ENCODE measurements at regions of chr14 and their contacts with region 1.

Region 1: DNA sequence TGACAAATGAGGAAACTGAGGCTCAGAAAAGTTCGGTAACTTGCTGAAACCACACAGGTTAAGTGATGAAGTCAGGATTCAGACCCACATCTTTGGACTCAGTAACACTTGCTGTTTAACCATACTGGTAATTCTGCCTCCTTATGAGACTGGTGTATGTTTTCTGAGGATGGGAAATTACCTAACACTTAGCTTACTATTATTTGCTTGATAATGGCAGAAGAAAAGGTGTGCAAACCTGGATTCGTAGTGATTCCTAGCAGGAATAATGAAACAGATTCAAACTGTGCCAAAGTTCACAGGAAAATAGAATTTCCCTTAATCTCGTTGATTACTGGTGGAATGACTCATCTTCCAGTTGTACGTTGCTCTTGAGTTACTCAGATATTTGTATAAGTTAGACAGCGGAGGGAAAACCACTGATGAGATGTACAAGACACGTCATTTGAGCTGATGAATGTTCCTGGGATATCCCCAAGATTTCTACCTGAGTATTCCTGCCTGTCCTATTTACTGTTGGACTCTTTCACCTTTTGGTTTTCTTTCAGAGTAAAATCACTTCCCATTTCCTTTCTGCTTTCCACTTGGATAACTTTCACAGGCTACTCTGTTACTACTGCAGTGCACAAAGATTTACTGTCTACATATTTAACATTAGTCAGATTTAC is 37.5 kb downstream of the PRORP start:
- DNase-seq: no peak
- ATAC-seq: peak; percentile 64
- H3K4me3 ChIP-seq: no peak overlapping the region
- H3K27ac ChIP-seq: peak overlapping the region; percentile 45; the same call in 1 of the 2 replicates
- H3K4me1 ChIP-seq: peaks cover 19% of the 10 kb centered on the region
- H3K27me3 ChIP-seq: no peaks in the 10 kb centered on the region
- CTCF ChIP-seq: no peak
- EP300 ChIP-seq: peak in 1 of 2 experiments; percentile 14; a peak in 1 of 4 replicates
- POLR2A ChIP-seq: no peak
- RAD21 ChIP-seq: no peak

Region 2: DNA sequence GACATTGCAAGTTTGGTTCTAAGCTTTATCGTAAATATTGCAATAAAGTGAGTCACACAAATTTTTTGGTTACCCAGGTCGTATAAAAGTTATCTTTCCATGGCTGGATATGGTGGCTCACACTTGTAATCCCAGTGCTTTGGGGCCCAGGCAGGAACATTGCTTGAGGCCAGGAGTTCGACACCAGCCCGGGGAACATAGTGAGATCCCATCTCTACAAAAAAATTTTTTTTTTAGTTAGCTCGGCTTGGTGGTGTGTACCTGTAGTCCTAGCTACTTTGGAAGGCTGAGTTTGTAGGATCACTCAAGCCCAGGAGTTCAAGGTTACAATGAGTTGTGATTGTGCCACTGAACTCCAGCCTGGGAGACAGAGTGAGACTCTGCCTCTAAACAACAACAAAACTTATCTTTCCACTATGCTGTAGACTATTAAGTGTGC is 13.1 kb before region 1 on chr14:
- CTCF ChIA-PET with region 1: interaction called, 28 read pairs
- POLR2A ChIA-PET with region 1: interaction called, 9 read pairs
- RAD21 ChIA-PET with region 1: interaction called, 10 read pairs
- SMC1A ChIA-PET with region 1: interaction called, 41 read pairs
- in situ Hi-C with region 1: no loop called
- intact Hi-C with region 1: no loop called
- DNase-seq: no peak
- ATAC-seq: no peak
- H3K4me3 ChIP-seq: no peak overlapping the region
- H3K27ac ChIP-seq: no peak overlapping the region
- H3K4me1 ChIP-seq: peaks cover 10% of the 10 kb centered on the region
- H3K27me3 ChIP-seq: no peaks in the 10 kb centered on the region
- CTCF ChIP-seq: no peak
- EP300 ChIP-seq: no peak
- POLR2A ChIP-seq: no peak
- RAD21 ChIP-seq: no peak

Region 3: GRCh38 chr14:35215110-35215876 is 55.4 kb after region 1 on chr14:
- CTCF ChIA-PET with region 1: interaction called, 10 read pairs
- POLR2A ChIA-PET with region 1: no interaction called
- RAD21 ChIA-PET with region 1: interaction called, 7 read pairs
- SMC1A ChIA-PET with region 1: interaction called, 5 read pairs
- in situ Hi-C with region 1: no loop called
- intact Hi-C with region 1: no loop called
- DNase-seq: no peak
- ATAC-seq: peak; percentile 63
- H3K4me3 ChIP-seq: no peak overlapping the region
- H3K27ac ChIP-seq: no peak overlapping the region
- H3K4me1 ChIP-seq: no peaks in the 10 kb centered on the region
- H3K27me3 ChIP-seq: no peaks in the 10 kb centered on the region
- CTCF ChIP-seq: peak; percentile 24 to 61 (median 31); a peak in 5 of 6 replicates
- EP300 ChIP-seq: no peak
- POLR2A ChIP-seq: no peak
- RAD21 ChIP-seq: peak; percentile 69

Region 4: DNA sequence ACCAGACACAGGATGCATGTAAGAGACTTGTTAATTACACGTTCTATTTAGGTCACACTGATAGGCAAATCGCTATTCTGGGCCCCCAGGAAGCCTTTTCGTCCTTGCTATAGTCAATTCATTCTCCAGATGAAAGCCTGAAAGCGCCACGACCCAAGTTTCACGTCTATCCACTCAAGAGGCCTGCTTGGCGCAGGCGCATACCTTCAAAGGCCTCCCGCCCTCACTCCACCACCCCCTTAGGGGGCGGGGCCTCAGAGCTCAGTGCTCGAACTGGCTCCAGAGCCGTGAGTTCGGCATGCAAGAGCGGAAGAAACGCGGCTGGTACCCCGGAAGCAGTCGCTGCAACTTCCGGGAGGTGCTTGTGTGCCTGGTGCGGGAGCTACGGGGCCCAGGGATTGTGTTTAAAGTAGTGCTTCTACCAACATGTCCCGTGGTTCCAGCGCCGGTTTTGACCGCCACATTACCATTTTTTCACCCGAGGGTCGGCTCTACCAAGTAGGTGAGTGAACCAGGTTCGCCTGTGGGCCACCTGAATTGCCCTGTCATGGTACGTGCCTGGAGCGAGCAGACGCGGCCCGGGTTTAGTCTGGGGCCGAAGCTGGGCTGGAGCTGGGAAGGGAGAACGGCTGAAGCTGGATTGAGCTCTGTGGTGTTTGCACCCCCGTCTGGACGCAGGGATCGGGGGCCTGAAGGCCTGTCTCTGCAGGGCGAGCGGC is 132.3 kb after region 1 on chr14 and contains the start of gene PSMA6:
- CTCF ChIA-PET with region 1: interaction called, 3 read pairs
- POLR2A ChIA-PET with region 1: no interaction called
- RAD21 ChIA-PET with region 1: interaction called, 10 read pairs
- SMC1A ChIA-PET with region 1: interaction called, 12 read pairs
- in situ Hi-C with region 1: no loop called
- intact Hi-C with region 1: loop called (anchors 5 kb)
- DNase-seq: peak; percentile 98
- ATAC-seq: peak; percentile 90
- H3K4me3 ChIP-seq: peak within 1 kb of the TSS; percentile 86
- H3K27ac ChIP-seq: peak within 1 kb of the TSS; percentile 80
- H3K4me1 ChIP-seq: peaks cover 18% of the 10 kb centered on the region
- H3K27me3 ChIP-seq: no peaks in the 10 kb centered on the region
- CTCF ChIP-seq: no peak
- EP300 ChIP-seq: 0 out of 4 replicates have a peak, but pooled peaks have one; percentile 20 to 36
- POLR2A ChIP-seq: peak; percentile 83
- RAD21 ChIP-seq: no peak
- polyA plus RNA-seq, gene PSMA6: 1,136 to 1,363 TPM